ENCODE measurements at regions of chr22 and their contacts with region 1.

Region 1: GRCh38 chr22:44380756-44381470 is 68.2 kb upstream of the SHISAL1 start:
- DNase-seq: no peak
- H3K4me3 ChIP-seq: no peak overlapping the region
- H3K27ac ChIP-seq: no peak overlapping the region
- H3K4me1 ChIP-seq: peaks cover 0 to 7% of the 10 kb centered on the region in 2 experiments; a peak in 1 of 4 replicates
- H3K27me3 ChIP-seq: no peaks in the 10 kb centered on the region; the same call in 1 of the 2 replicates
- CTCF ChIP-seq: no peak
- EP300 ChIP-seq: no peak
- RAD21 ChIP-seq: no peak

Region 2: GRCh38 chr22:44369293-44369652 is 11.6 kb before region 1 on chr22:
- CTCF ChIA-PET with region 1: interaction called, 22 read pairs
- POLR2A ChIA-PET with region 1: no interaction called
- DNase-seq: no peak
- H3K4me3 ChIP-seq: no peak overlapping the region
- H3K27ac ChIP-seq: no peak overlapping the region
- H3K4me1 ChIP-seq: peaks cover 0 to 25% of the 10 kb centered on the region in 2 experiments; a peak in 1 of 4 replicates
- H3K27me3 ChIP-seq: no peaks in the 10 kb centered on the region
- CTCF ChIP-seq: peak; percentile 30; the same call in 1 of the 2 replicates
- EP300 ChIP-seq: no peak
- RAD21 ChIP-seq: no peak